Ascending aorta (tissue), 2 donors: ENCODE measurements at regions of chrX and their contacts with region 1.

Region 1: DNA sequence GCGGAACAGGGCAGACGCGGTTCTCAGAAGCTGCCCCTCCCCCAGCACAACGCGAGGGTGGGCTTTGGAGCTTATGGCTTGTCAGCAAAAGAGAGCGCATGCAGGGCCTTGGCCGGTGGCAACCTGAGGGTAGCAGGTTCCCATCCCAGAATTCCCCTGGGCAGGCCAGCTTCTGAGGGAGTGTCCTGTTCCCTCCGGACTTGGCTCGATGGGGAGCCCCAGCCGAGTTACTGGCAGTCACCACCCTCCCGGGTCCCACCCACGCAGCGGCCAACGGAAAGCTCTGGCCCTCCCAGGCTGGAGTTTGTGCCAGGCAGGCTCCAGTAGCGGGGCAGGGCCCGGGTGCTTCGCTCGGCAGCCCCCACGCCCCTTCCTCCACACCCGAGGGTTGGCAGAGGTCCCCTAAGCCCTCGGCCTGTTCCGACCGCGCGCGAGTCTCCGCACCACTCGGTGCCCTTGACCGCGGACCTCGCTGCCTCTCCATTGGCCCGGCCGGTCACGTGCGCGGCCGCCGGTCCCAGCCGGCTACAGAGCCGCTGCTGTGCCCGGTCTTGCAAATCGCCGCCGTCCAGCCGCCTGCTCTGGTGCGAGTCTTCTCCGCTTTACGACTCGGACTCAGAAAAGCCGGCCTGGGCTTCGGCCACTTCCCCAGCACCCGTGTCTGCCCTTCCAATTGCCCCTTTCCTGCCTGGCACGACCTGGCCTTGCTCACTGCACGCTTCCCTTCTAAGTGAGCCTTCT is 20.9 kb upstream of the MTM1 start:
- DNase-seq: peak in 1 of 2 donors; percentile 79
- H3K4me3 ChIP-seq: peak overlapping the region; percentile 24 to 66
- H3K27ac ChIP-seq: peak overlapping the region; percentile 73 to 92
- H3K4me1 ChIP-seq: peaks cover 3 to 5% of the 10 kb centered on the region in 2 donors
- H3K27me3 ChIP-seq: no peaks in the 10 kb centered on the region
- CTCF ChIP-seq: no peak

Region 2: DNA sequence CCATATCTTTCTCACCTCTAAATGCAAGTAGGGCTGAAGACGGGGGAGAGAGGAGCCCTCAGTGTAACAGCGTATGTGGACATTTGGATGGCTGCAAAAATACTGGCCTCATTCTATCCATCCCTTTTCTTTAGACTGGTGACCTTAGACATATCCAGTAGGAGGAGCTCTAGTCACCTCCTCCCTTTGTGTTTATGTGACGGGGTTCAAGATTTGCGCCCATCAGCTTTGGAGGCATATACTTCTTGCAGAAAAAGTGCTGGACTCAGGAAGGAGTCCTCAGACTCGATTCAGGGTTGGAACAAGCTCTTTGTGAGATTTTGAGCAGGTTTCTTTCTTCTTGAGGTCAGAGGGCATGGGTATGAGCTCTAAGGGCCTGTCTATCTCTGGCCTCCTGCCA is 98.2 kb before region 1 on chrX:
- intact Hi-C with region 1: no loop called
- DNase-seq: no peak
- H3K4me3 ChIP-seq: no peak overlapping the region
- H3K27ac ChIP-seq: no peak overlapping the region
- H3K4me1 ChIP-seq: no peaks in the 10 kb centered on the region
- H3K27me3 ChIP-seq: no peaks in the 10 kb centered on the region
- CTCF ChIP-seq: no peak

Region 3: GRCh38 chrX:150508451-150509367 is 38.8 kb before region 1 on chrX:
- intact Hi-C with region 1: loop called (anchors 5 kb)
- DNase-seq: peak in 1 of 2 donors; percentile 77
- H3K4me3 ChIP-seq: peak overlapping the region; percentile 12 to 52
- H3K27ac ChIP-seq: peak overlapping the region; percentile 66 to 84
- H3K4me1 ChIP-seq: peaks cover 0 to 12% of the 10 kb centered on the region in 2 donors
- H3K27me3 ChIP-seq: no peaks in the 10 kb centered on the region
- CTCF ChIP-seq: no peak

Region 4: GRCh38 chrX:150525061-150525919 is 22.3 kb before region 1 on chrX:
- intact Hi-C with region 1: loop called (anchors 2 kb)
- DNase-seq: peak in 1 of 2 donors; percentile 72
- H3K4me3 ChIP-seq: no peak overlapping the region
- H3K27ac ChIP-seq: peak overlapping the region in 1 of 2 donors; percentile 7
- H3K4me1 ChIP-seq: no peaks in the 10 kb centered on the region
- H3K27me3 ChIP-seq: no peaks in the 10 kb centered on the region
- CTCF ChIP-seq: no peak

Region 5: DNA sequence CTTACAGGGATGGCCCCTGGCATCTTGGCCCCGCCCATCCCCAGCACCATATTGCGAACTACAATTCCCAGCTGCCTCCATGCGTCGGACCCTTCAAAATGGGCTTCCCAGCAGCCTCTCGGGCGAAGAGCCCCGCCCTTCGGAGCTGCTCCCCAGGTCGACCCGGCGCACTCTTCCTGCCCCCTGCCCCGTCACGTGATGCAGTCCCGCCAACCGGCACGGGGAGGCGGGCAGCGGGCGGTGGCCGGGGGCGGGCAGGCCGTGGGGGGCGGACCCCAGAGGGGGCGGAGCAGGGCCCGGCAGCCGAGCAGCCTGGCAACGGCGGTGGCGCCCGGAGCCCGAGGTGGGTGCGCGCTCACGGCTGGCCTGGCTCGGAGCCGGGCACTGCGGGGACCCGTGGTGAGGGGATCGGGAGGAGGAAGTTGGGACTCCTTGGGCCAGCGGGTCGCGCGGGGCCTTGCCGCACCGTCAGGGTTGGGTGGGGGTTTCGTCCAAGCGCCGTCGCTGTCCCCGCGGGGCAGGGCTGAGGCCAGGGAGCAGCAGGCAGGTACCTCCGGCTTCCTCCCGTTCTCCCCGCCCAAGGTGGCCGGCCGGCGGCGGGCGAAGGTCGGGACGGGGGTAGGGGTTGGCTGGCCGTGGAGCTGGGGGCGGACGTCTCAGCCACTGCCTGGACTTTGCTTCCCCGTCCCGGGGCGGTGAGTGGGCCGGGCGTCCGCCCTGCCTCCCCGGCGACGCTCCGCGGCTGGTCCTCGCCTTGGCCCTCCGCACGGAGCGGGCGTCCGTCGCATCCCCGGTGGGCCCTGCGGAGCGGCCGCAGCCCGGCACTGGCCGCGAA is 21.0 kb after region 1 on chrX and contains the start of gene MTM1:
- intact Hi-C with region 1: loop called (anchors 1 kb)
- DNase-seq: peak; percentile 82 to 96
- H3K4me3 ChIP-seq: peak within 1 kb of the TSS; percentile 55 to 74
- H3K27ac ChIP-seq: peak within 1 kb of the TSS; percentile 76 to 84
- H3K4me1 ChIP-seq: no peaks in the 10 kb centered on the region
- H3K27me3 ChIP-seq: no peaks in the 10 kb centered on the region
- CTCF ChIP-seq: no peak
- total RNA-seq, gene MTM1: 7.3 TPM